Naive thymus-derived CD8-positive, alpha-beta T cell (primary cell): ENCODE measurements at regions of chr2 and their contacts with region 1.

Region 1: GRCh38 chr2:99154643-99155536 is at the starts of genes LIPT1 and TSGA10:
- DNase-seq: peak; percentile 89 to 96 (median 92)
- ATAC-seq: peak; percentile 91 to 92
- H3K4me3 Mint-ChIP-seq: peak within 1 kb of the TSS in 3 of 10 donors; percentile 88 to 94 (median 89)
- H3K27ac Mint-ChIP-seq: peak within 1 kb of the TSS in 1 of 10 donors; percentile 96
- H3K4me1 Mint-ChIP-seq: peaks cover 14 to 41% (median 24%) of the 10 kb centered on the region in 4 donors
- H3K27me3 Mint-ChIP-seq: no peaks in the 10 kb centered on the region
- polyA plus RNA-seq, gene LIPT1: 19.0 to 26.9 (median 22.0) TPM
- polyA plus RNA-seq, gene TSGA10: 22.5 to 26.4 (median 24.1) TPM

Region 2: GRCh38 chr2:99180755-99181623 is 26.1 kb after region 1 on chr2 and contains the starts of genes MITD1 and MRPL30:
- POLR2A ChIA-PET with region 1: interaction called, 24 read pairs
- DNase-seq: peak; percentile 77 to 94 (median 92)
- ATAC-seq: peak; percentile 94 to 96
- H3K4me3 Mint-ChIP-seq: peak within 1 kb of the TSS; percentile 92 to 100 (median 99)
- H3K27ac Mint-ChIP-seq: peak within 1 kb of the TSS; percentile 99 to 100 (median 99)
- H3K4me1 Mint-ChIP-seq: peaks cover 32 to 73% (median 66%) of the 10 kb centered on the region in 4 donors
- H3K27me3 Mint-ChIP-seq: no peaks in the 10 kb centered on the region
- polyA plus RNA-seq, gene MITD1: 40.4 to 49.0 (median 43.8) TPM
- polyA plus RNA-seq, gene MRPL30: 19.1 to 23.5 (median 20.4) TPM

Region 3: DNA sequence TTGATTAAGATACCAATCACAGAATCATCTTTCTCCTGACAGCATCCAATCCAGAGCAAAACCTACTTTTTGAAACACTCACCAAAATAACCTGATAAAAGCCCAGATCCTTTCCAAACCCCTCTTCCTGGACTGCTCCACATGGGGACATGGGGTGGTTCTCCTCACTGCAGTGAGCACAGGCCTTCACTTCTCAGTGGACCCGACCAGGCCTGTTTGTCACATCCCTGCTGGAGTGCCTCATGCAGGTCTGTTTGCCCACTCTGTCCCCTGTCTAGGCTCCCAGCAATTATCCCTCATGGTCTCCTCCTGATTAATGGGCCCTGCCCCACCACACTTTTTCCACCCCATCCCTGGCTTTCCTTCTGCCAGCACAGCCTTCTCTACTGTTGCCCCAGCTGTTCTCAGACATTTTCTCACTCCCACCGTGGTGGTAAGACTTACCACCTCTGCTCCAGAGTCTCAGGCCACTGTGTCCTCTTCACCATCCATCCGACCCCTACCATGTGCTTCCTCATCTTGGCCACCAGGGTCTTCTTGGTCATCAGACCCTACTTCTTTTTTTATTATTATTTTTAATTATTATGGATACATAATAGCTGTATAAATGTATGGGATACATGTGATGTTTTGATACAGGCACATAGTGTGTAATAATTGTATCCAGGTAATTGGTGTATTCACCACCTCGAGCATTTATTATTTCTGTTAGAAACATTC is 47.2 kb after region 1 on chr2:
- POLR2A ChIA-PET with region 1: no interaction called
- DNase-seq: no peak
- ATAC-seq: no peak
- H3K4me3 Mint-ChIP-seq: no peak overlapping the region
- H3K27ac Mint-ChIP-seq: peak overlapping the region in 8 of 10 donors; percentile 2 to 87 (median 63)
- H3K4me1 Mint-ChIP-seq: peaks cover 0 to 3% (median 0%) of the 10 kb centered on the region in 4 donors
- H3K27me3 Mint-ChIP-seq: no peaks in the 10 kb centered on the region

Region 4: GRCh38 chr2:99238599-99238998 is 83.7 kb after region 1 on chr2:
- POLR2A ChIA-PET with region 1: no interaction called
- DNase-seq: no peak
- ATAC-seq: no peak
- H3K4me3 Mint-ChIP-seq: no peak overlapping the region
- H3K27ac Mint-ChIP-seq: no peak overlapping the region
- H3K4me1 Mint-ChIP-seq: no peaks in the 10 kb centered on the region
- H3K27me3 Mint-ChIP-seq: no peaks in the 10 kb centered on the region